Activated T-helper 2 cell treated with anti-CD3 and anti-CD28 coated beads, Interferon-gamma antibody, Interleukin-2, Interleukin-4, amounts not matched to agents 10 μg/mL and 5 μg/mL and 100 μg/mL, durations not matched to agents 14 hours and 24 hours and 36 hours (primary cell): ENCODE measurements at regions of chr1 and their contacts with region 1.

Region 1: GRCh38 chr1:145601593-145601992 is 6.2 kb upstream of the GPR89A start:
- DNase-seq: no peak
- H3K4me3 Mint-ChIP-seq: no peak overlapping the region
- H3K27ac Mint-ChIP-seq: no peak overlapping the region
- H3K4me1 Mint-ChIP-seq: no peaks in the 10 kb centered on the region
- H3K27me3 Mint-ChIP-seq: peaks cover 6% of the 10 kb centered on the region

Region 2: DNA sequence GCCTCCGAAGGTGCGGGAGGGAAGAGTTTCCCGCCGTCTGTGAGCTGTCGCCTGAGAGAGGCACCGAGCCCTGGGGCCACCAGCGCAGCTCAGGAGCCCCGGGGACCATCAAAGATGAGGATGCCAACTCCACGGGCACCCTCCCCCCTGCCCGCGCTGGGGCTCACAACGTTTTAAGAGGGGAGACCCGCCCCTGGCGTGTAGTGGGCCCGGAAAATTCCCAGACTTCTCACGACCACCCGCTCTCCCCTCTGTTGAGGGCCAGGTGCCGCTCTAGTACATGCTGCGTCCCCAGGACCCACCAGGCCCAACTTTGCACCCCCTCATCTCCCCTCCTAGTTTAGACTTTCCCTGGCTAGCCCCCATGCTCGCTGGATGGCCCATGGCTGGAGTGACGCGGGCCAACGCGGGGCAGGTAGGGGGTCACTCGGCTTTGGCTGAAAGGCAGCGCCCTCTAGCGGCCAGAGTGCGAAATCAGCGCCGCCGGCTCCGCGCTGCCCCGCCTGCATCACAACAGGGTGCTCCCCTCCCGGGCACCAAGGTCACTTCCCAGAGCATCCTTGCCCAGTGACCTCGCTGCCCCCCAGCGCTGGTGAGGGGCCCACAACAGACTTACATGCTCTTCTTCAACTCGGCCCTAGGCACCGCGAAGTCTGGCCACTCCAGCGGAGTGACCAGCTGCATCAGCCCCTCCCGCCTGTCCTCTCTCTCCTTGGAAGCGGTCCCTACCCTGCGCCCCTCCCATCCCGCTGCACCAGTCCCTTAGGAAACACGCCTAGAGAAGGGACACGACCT is 119.5 kb after region 1 on chr1:
- intact Hi-C with region 1: loop called (anchors 5 kb)
- DNase-seq: peak; percentile 58
- H3K4me3 Mint-ChIP-seq: peak overlapping the region; percentile 52
- H3K27ac Mint-ChIP-seq: no peak overlapping the region
- H3K4me1 Mint-ChIP-seq: peaks cover 29% of the 10 kb centered on the region
- H3K27me3 Mint-ChIP-seq: peaks cover 20% of the 10 kb centered on the region

Region 3: GRCh38 chr1:145906954-145907753 is 305.6 kb after region 1 on chr1:
- intact Hi-C with region 1: no loop called
- DNase-seq: no peak
- H3K4me3 Mint-ChIP-seq: no peak overlapping the region
- H3K27ac Mint-ChIP-seq: no peak overlapping the region
- H3K4me1 Mint-ChIP-seq: peaks cover 7% of the 10 kb centered on the region
- H3K27me3 Mint-ChIP-seq: no peaks in the 10 kb centered on the region